ENCODE measurements at regions of chr7 and their contacts with region 1.

Region 1: GRCh38 chr7:23938937-23939552 is 229.0 kb downstream of the STK31 start:
- DNase-seq: peak; percentile 62 to 63
- H3K4me3 ChIP-seq: no peak overlapping the region
- H3K4me3 Mint-ChIP-seq: no peak overlapping the region
- H3K27ac Mint-ChIP-seq: no peak overlapping the region
- H3K4me1 ChIP-seq: no peaks in the 10 kb centered on the region
- H3K4me1 Mint-ChIP-seq: no peaks in the 10 kb centered on the region
- H3K27me3 ChIP-seq: no peaks in the 10 kb centered on the region
- H3K27me3 Mint-ChIP-seq: peaks cover 19% of the 10 kb centered on the region
- CTCF ChIP-seq: peak; percentile 65 to 83

Region 2: GRCh38 chr7:23863209-23863798 is 75.7 kb before region 1 on chr7:
- CTCF ChIA-PET with region 1: interaction called, 11 read pairs
- POLR2A ChIA-PET with region 1: no interaction called
- intact Hi-C with region 1: no loop called
- DNase-seq: peak in 1 of 2 experiments; percentile 44
- H3K4me3 ChIP-seq: no peak overlapping the region
- H3K4me3 Mint-ChIP-seq: no peak overlapping the region
- H3K27ac Mint-ChIP-seq: no peak overlapping the region
- H3K4me1 ChIP-seq: no peaks in the 10 kb centered on the region
- H3K4me1 Mint-ChIP-seq: no peaks in the 10 kb centered on the region
- H3K27me3 ChIP-seq: no peaks in the 10 kb centered on the region
- H3K27me3 Mint-ChIP-seq: peaks cover 7% of the 10 kb centered on the region
- CTCF ChIP-seq: peak; percentile 62 to 83

Region 3: GRCh38 chr7:24115661-24116060 is 176.6 kb after region 1 on chr7:
- CTCF ChIA-PET with region 1: no interaction called
- POLR2A ChIA-PET with region 1: no interaction called
- intact Hi-C with region 1: loop called (anchors 5 kb)
- DNase-seq: no peak
- H3K4me3 ChIP-seq: no peak overlapping the region
- H3K4me3 Mint-ChIP-seq: no peak overlapping the region
- H3K27ac Mint-ChIP-seq: no peak overlapping the region
- H3K4me1 ChIP-seq: no peaks in the 10 kb centered on the region
- H3K4me1 Mint-ChIP-seq: no peaks in the 10 kb centered on the region
- H3K27me3 ChIP-seq: no peaks in the 10 kb centered on the region
- H3K27me3 Mint-ChIP-seq: no peaks in the 10 kb centered on the region
- CTCF ChIP-seq: no peak

Measured in Caco-2 (cell line).